Heart left ventricle (tissue), 16 donors: ENCODE measurements at regions of chr14 and their contacts with region 1.

Region 1: GRCh38 chr14:51922624-51923023 is 62.2 kb downstream of the GNG2 start:
- DNase-seq: peak in 2 of 5 donors; percentile 28 to 45
- ATAC-seq: peak in 3 of 4 donors; percentile 69 to 81 (median 77)
- H3K4me3 ChIP-seq: peak overlapping the region in 3 of 12 donors; percentile 6 to 24 (median 10)
- H3K27ac ChIP-seq: peak overlapping the region in 10 of 12 donors; percentile 13 to 79 (median 57)
- H3K4me1 ChIP-seq: peaks cover 0 to 15% (median 0%) of the 10 kb centered on the region in 12 donors
- H3K27me3 ChIP-seq: no peaks in the 10 kb centered on the region
- CTCF ChIP-seq: no peak
- POLR2A ChIP-seq: no peak

Region 2: GRCh38 chr14:51828017-51828797 is 94.4 kb before region 1 on chr14:
- intact Hi-C with region 1: no loop called
- DNase-seq: peak in 4 of 5 donors; percentile 25 to 63 (median 32)
- ATAC-seq: peak in 2 of 4 donors; percentile 43 to 54
- H3K4me3 ChIP-seq: no peak overlapping the region
- H3K27ac ChIP-seq: no peak overlapping the region
- H3K4me1 ChIP-seq: peaks cover 0 to 9% (median 0%) of the 10 kb centered on the region in 12 donors
- H3K27me3 ChIP-seq: peaks cover 0 to 9% (median 0%) of the 10 kb centered on the region in 9 donors
- CTCF ChIP-seq: no peak
- POLR2A ChIP-seq: no peak

Region 3: DNA sequence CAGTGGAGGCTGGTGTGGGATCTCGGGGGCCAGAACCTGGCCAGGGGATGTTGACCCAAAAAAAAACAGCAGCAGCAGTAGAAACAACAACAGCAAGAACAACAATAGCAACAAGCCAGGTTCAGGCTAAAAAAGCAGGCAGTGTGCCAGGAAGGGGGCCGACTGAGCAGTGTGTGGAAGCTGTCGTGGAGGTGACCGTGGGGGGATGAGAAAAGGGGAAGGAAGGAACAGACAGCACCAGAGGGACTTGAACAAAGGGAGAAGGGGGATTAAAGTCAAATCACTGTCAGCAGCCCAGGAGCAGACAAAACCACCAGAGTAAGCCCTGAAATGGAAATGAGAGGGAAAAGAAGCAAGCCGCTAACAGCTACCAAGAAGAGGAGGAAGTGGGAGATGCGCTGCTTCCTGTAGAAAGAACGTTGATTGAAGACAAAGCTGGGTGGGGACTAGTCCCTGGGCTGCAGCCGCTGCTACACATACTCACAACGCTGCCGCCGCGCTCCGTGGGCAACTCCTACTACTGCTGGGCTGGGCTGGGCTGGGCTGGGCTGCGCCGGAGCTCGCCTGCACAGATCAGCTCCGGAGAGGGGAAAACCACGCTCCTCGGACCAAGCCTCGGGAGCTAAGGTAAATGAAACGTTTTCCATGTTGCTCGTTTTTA is 62.3 kb before region 1 on chr14 and contains the start of gene GNG2:
- intact Hi-C with region 1: loop called in 1 of 10 experiments (anchors 5 kb)
- DNase-seq: peak; percentile 81 to 93 (median 81)
- ATAC-seq: peak; percentile 96 to 100 (median 99)
- H3K4me3 ChIP-seq: peak within 1 kb of the TSS; percentile 25 to 71 (median 53)
- H3K27ac ChIP-seq: peak within 1 kb of the TSS in 11 of 12 donors; percentile 6 to 89 (median 52)
- H3K4me1 ChIP-seq: peaks cover 0 to 73% (median 7%) of the 10 kb centered on the region in 12 donors
- H3K27me3 ChIP-seq: no peaks in the 10 kb centered on the region
- CTCF ChIP-seq: no peak
- POLR2A ChIP-seq: peak in 1 of 2 donors; percentile 44
- total RNA-seq, gene GNG2: 3.3 to 29.2 (median 7.8) TPM

Region 4: GRCh38 chr14:51901475-51902024 is 21.1 kb before region 1 on chr14:
- intact Hi-C with region 1: no loop called
- DNase-seq: no peak
- ATAC-seq: no peak
- H3K4me3 ChIP-seq: no peak overlapping the region
- H3K27ac ChIP-seq: no peak overlapping the region
- H3K4me1 ChIP-seq: peaks cover 0 to 19% (median 0%) of the 10 kb centered on the region in 12 donors
- H3K27me3 ChIP-seq: no peaks in the 10 kb centered on the region
- CTCF ChIP-seq: no peak
- POLR2A ChIP-seq: no peak

Region 5: DNA sequence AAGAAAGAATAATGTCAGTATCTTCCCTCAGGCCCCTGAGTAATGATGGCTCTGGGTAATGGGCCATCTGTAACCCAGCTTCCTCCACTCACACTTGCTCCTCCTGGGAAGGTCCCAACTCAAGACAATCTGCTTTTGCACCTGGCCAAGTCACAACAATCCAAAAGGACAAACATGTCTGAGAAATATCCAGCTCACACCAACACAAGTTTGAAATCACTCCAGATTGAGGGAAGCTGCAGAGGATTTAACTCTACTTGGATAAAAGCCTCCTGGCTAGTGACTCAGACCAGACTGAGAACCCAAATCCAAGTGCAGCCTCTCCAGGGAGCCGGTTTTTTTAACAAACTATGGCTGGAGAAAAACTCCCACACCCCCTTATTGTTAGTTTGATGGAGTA is 100.9 kb after region 1 on chr14:
- intact Hi-C with region 1: no loop called
- DNase-seq: peak in 2 of 5 donors; percentile 56 to 61
- ATAC-seq: peak; percentile 22 to 66 (median 41)
- H3K4me3 ChIP-seq: no peak overlapping the region
- H3K27ac ChIP-seq: peak overlapping the region in 9 of 12 donors; percentile 23 to 76 (median 55)
- H3K4me1 ChIP-seq: peaks cover 19 to 92% (median 75%) of the 10 kb centered on the region in 12 donors
- H3K27me3 ChIP-seq: no peaks in the 10 kb centered on the region
- CTCF ChIP-seq: no peak
- POLR2A ChIP-seq: no peak

Region 6: GRCh38 chr14:52824507-52824906 is 901.9 kb after region 1 on chr14:
- intact Hi-C with region 1: no loop called
- DNase-seq: no peak
- ATAC-seq: no peak
- H3K4me3 ChIP-seq: no peak overlapping the region
- H3K27ac ChIP-seq: no peak overlapping the region
- H3K4me1 ChIP-seq: peaks cover 0 to 18% (median 0%) of the 10 kb centered on the region in 12 donors
- H3K27me3 ChIP-seq: no peaks in the 10 kb centered on the region
- CTCF ChIP-seq: no peak
- POLR2A ChIP-seq: no peak